Caco-2 (cell line): ENCODE measurements at regions of chr12 and their contacts with region 1.

Region 1: DNA sequence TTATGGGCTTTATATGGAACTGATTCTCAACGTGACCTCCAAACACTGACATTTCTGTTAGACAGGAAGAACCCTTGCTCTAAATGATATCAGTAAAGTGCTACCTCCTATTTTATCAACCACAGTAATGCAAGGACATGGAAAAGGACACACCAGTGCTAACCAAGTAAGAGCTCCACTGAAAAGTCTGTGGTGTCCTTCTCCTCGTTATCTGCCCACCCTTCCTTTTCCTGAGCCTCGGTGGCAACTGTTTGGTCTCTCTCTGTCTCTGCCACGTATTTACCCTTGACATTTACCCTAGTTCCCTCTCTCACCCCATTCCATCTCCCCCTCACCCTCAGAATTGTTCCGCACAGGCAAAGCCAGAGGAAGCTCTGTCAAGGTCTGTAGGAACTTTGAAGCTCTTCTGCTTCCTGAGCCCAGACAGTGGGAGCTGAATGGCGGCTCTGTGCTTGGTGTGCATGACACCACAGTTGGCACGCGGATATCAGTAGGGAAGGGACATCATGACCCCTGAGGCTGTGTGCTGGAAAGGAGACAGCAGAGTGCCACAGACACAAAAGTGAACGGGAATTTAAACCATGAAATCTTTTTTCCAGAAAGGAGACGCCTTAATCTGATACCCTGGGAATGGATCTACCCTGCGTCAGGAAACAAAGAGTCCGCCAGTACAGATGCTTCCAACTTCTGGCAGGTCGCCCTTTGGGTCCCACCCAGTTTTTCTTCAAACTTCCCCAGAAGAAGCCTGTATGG is 50.8 kb downstream of the NTN4 start:
- DNase-seq: no peak
- H3K4me3 ChIP-seq: no peak overlapping the region
- H3K4me3 Mint-ChIP-seq: no peak overlapping the region
- H3K27ac Mint-ChIP-seq: peak overlapping the region; percentile 74
- H3K4me1 ChIP-seq: peaks cover 51% of the 10 kb centered on the region
- H3K4me1 Mint-ChIP-seq: peaks cover 33% of the 10 kb centered on the region
- H3K27me3 ChIP-seq: no peaks in the 10 kb centered on the region
- H3K27me3 Mint-ChIP-seq: no peaks in the 10 kb centered on the region
- CTCF ChIP-seq: no peak

Region 2: GRCh38 chr12:95623585-95624042 is 116.1 kb before region 1 on chr12:
- CTCF ChIA-PET with region 1: no interaction called
- POLR2A ChIA-PET with region 1: no interaction called
- intact Hi-C with region 1: loop called (anchors 5 kb)
- DNase-seq: peak; percentile 78
- H3K4me3 ChIP-seq: no peak overlapping the region
- H3K4me3 Mint-ChIP-seq: no peak overlapping the region
- H3K27ac Mint-ChIP-seq: peak overlapping the region; percentile 53
- H3K4me1 ChIP-seq: peaks cover 13% of the 10 kb centered on the region; the same call in 1 of the 2 replicates
- H3K4me1 Mint-ChIP-seq: no peaks in the 10 kb centered on the region
- H3K27me3 ChIP-seq: no peaks in the 10 kb centered on the region
- H3K27me3 Mint-ChIP-seq: no peaks in the 10 kb centered on the region
- CTCF ChIP-seq: peak; percentile 61 to 76

Region 3: GRCh38 chr12:95653761-95654546 is 85.8 kb before region 1 on chr12:
- CTCF ChIA-PET with region 1: no interaction called
- POLR2A ChIA-PET with region 1: no interaction called
- intact Hi-C with region 1: loop called (anchors 5 kb)
- DNase-seq: peak; percentile 40 to 76
- H3K4me3 ChIP-seq: no peak overlapping the region
- H3K4me3 Mint-ChIP-seq: peak overlapping the region; percentile 10
- H3K27ac Mint-ChIP-seq: peak overlapping the region; percentile 23
- H3K4me1 ChIP-seq: peaks cover 15% of the 10 kb centered on the region
- H3K4me1 Mint-ChIP-seq: peaks cover 33% of the 10 kb centered on the region
- H3K27me3 ChIP-seq: no peaks in the 10 kb centered on the region
- H3K27me3 Mint-ChIP-seq: no peaks in the 10 kb centered on the region
- CTCF ChIP-seq: no peak

Region 4: DNA sequence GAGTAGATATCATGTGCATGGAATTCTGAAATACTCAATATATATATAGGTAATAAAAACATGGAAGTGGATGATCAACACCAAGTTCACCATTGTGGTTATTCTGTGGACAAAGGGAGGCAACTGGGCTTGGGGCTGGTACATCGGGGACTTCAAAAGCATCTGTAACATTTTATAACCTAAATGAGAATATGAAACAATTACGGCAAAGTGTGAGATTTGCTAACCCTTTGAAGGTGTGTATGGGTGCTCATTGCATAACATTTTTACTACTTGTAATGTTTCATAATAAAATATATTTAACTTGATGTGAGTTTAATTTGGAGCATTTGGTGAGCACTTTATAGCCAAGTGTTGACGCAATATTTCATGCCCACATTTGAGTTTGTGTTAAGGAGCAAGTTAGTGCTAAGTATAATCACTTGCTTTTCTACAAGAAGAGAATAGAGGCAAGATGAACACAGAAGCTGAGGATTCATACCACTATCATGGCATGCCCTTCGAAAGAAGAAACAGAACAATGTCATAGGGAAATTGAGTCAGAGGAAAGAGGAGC is 58.4 kb before region 1 on chr12:
- CTCF ChIA-PET with region 1: no interaction called
- POLR2A ChIA-PET with region 1: no interaction called
- intact Hi-C with region 1: no loop called
- DNase-seq: no peak
- H3K4me3 ChIP-seq: no peak overlapping the region
- H3K4me3 Mint-ChIP-seq: no peak overlapping the region
- H3K27ac Mint-ChIP-seq: no peak overlapping the region
- H3K4me1 ChIP-seq: no peaks in the 10 kb centered on the region
- H3K4me1 Mint-ChIP-seq: no peaks in the 10 kb centered on the region
- H3K27me3 ChIP-seq: no peaks in the 10 kb centered on the region
- H3K27me3 Mint-ChIP-seq: no peaks in the 10 kb centered on the region
- CTCF ChIP-seq: no peak

Region 5: GRCh38 chr12:95755261-95755865 is 15.6 kb after region 1 on chr12:
- CTCF ChIA-PET with region 1: no interaction called
- POLR2A ChIA-PET with region 1: no interaction called
- intact Hi-C with region 1: loop called (anchors 1 kb)
- DNase-seq: peak in 1 of 2 experiments; percentile 21
- H3K4me3 ChIP-seq: no peak overlapping the region
- H3K4me3 Mint-ChIP-seq: peak overlapping the region; percentile 25
- H3K27ac Mint-ChIP-seq: peak overlapping the region; percentile 77
- H3K4me1 ChIP-seq: peaks cover 50% of the 10 kb centered on the region
- H3K4me1 Mint-ChIP-seq: peaks cover 69% of the 10 kb centered on the region
- H3K27me3 ChIP-seq: no peaks in the 10 kb centered on the region
- H3K27me3 Mint-ChIP-seq: no peaks in the 10 kb centered on the region
- CTCF ChIP-seq: no peak

Region 6: GRCh38 chr12:95762123-95762785 is 22.5 kb after region 1 on chr12:
- CTCF ChIA-PET with region 1: no interaction called
- POLR2A ChIA-PET with region 1: no interaction called
- intact Hi-C with region 1: loop called (anchors 1 kb)
- DNase-seq: peak; percentile 68 to 74
- H3K4me3 ChIP-seq: no peak overlapping the region
- H3K4me3 Mint-ChIP-seq: peak overlapping the region; percentile 48
- H3K27ac Mint-ChIP-seq: peak overlapping the region; percentile 71
- H3K4me1 ChIP-seq: peaks cover 72% of the 10 kb centered on the region
- H3K4me1 Mint-ChIP-seq: peaks cover 53% of the 10 kb centered on the region
- H3K27me3 ChIP-seq: no peaks in the 10 kb centered on the region
- H3K27me3 Mint-ChIP-seq: no peaks in the 10 kb centered on the region
- CTCF ChIP-seq: no peak

Region 7: GRCh38 chr12:95790033-95790911 is 50.5 kb after region 1 on chr12 and contains the start of gene NTN4:
- CTCF ChIA-PET with region 1: no interaction called
- POLR2A ChIA-PET with region 1: no interaction called
- intact Hi-C with region 1: loop called (anchors 1 kb)
- DNase-seq: peak; percentile 58
- H3K4me3 ChIP-seq: peak within 1 kb of the TSS; percentile 89
- H3K4me3 Mint-ChIP-seq: peak within 1 kb of the TSS; percentile 97
- H3K27ac Mint-ChIP-seq: peak within 1 kb of the TSS; percentile 88
- H3K4me1 ChIP-seq: peaks cover 52% of the 10 kb centered on the region
- H3K4me1 Mint-ChIP-seq: peaks cover 5% of the 10 kb centered on the region
- H3K27me3 ChIP-seq: no peaks in the 10 kb centered on the region
- H3K27me3 Mint-ChIP-seq: no peaks in the 10 kb centered on the region
- CTCF ChIP-seq: no peak
- total RNA-seq, gene NTN4: 54.1 and 55.0 TPM in 2 replicates

Region 8: GRCh38 chr12:95959107-95959506 is 219.4 kb after region 1 on chr12:
- CTCF ChIA-PET with region 1: no interaction called
- POLR2A ChIA-PET with region 1: no interaction called
- intact Hi-C with region 1: no loop called
- DNase-seq: peak in 1 of 2 experiments; percentile 28
- H3K4me3 ChIP-seq: no peak overlapping the region
- H3K4me3 Mint-ChIP-seq: no peak overlapping the region
- H3K27ac Mint-ChIP-seq: no peak overlapping the region
- H3K4me1 ChIP-seq: no peaks in the 10 kb centered on the region
- H3K4me1 Mint-ChIP-seq: no peaks in the 10 kb centered on the region
- H3K27me3 ChIP-seq: no peaks in the 10 kb centered on the region
- H3K27me3 Mint-ChIP-seq: peaks cover 5% of the 10 kb centered on the region
- CTCF ChIP-seq: peak; percentile 15 to 33